Activated CD4-positive, alpha-beta memory T cell treated with anti-CD3 and anti-CD28 coated beads for 36 hours (primary cell): ENCODE measurements at regions of chr3 and their contacts with region 1.

Region 1: GRCh38 chr3:148861277-148861869 is 3.7 kb upstream of the CPA3 start:
- DNase-seq: no peak
- H3K4me3 Mint-ChIP-seq: no peak overlapping the region
- H3K27ac Mint-ChIP-seq: no peak overlapping the region
- H3K4me1 Mint-ChIP-seq: no peaks in the 10 kb centered on the region
- H3K27me3 Mint-ChIP-seq: peaks cover 15% of the 10 kb centered on the region

Region 2: DNA sequence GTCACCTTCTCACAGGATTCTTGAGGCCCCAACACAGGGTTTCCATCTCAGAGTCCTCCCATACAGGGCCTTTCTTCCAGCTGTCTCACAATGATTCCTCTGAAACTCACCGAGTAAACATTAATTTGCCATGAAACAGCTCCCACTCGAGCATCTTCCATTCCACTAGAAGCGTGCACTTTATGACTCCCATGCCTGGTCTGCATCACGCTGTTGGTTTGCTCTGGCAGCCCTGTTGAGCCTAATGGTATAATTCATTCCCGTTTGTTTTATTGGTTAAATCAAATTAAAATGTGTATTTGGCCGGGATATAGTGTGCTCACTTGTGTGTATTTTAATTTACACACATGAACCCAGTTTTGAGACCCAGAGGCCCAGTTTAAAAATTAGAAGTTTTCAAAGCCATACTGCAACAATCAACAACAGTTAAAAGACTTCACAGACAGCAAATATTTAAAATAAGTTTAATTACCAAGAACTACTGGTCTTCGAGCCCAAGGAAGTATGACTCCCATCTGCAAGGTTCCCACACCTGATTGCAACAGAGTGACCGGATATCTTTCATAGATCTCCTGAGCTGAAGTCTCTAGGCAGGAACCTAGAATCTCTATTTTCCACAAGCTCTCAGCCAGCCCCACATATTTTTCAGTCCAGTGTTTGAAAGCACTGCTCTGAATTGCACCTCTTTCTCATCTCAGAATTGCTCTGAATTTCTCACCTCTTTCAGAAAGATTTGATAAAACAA is 87.7 kb after region 1 on chr3:
- CTCF ChIA-PET with region 1: interaction called, 96 read pairs
- POLR2A ChIA-PET with region 1: no interaction called
- intact Hi-C with region 1: loop called (anchors 1 kb)
- DNase-seq: no peak
- H3K4me3 Mint-ChIP-seq: no peak overlapping the region
- H3K27ac Mint-ChIP-seq: no peak overlapping the region
- H3K4me1 Mint-ChIP-seq: no peaks in the 10 kb centered on the region
- H3K27me3 Mint-ChIP-seq: no peaks in the 10 kb centered on the region

Region 3: GRCh38 chr3:149273096-149273751 is 411.9 kb after region 1 on chr3:
- CTCF ChIA-PET with region 1: interaction called, 4 read pairs
- POLR2A ChIA-PET with region 1: no interaction called
- intact Hi-C with region 1: loop called (anchors 1 kb)
- DNase-seq: peak; percentile 26
- H3K4me3 Mint-ChIP-seq: no peak overlapping the region
- H3K27ac Mint-ChIP-seq: no peak overlapping the region
- H3K4me1 Mint-ChIP-seq: peaks cover 9% of the 10 kb centered on the region
- H3K27me3 Mint-ChIP-seq: no peaks in the 10 kb centered on the region